ENCODE measurements at regions of chr6 and their contacts with region 1.

Region 1: DNA sequence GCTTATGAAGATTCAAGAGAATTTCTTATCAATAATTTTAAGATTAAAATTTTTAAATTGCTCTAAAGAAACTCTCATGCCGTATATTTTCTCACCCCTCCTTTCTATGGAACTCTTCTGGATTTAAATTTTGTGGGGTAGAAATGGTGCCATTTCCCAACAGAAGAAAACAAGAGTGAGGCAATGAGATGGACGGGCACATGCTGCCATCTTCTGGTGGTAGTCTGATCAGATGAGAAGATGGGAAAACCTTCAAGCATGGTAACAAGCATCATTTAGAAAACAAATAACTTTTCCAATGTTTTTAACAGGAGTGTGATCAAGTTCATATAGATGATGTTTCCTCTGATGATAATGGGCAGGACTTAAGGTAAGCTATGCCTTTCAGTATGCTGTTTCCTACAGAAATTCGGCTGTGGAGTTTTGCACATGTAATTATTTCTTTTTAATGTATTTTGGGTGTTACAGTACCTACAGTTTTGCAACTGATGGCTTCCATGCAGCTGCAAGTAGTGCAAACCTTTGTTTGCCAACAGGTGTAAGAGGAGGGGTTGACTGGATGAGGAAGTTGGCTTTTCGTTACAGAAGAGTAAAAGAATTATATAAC is 271.4 kb downstream of the EYA4 start:
- DNase-seq: peak; percentile 33
- H3K4me3 ChIP-seq: no peak overlapping the region
- H3K27ac ChIP-seq: no peak overlapping the region
- H3K4me1 ChIP-seq: no peaks in the 10 kb centered on the region
- H3K27me3 ChIP-seq: no peaks in the 10 kb centered on the region
- CTCF ChIP-seq: peak; percentile 21

Region 2: DNA sequence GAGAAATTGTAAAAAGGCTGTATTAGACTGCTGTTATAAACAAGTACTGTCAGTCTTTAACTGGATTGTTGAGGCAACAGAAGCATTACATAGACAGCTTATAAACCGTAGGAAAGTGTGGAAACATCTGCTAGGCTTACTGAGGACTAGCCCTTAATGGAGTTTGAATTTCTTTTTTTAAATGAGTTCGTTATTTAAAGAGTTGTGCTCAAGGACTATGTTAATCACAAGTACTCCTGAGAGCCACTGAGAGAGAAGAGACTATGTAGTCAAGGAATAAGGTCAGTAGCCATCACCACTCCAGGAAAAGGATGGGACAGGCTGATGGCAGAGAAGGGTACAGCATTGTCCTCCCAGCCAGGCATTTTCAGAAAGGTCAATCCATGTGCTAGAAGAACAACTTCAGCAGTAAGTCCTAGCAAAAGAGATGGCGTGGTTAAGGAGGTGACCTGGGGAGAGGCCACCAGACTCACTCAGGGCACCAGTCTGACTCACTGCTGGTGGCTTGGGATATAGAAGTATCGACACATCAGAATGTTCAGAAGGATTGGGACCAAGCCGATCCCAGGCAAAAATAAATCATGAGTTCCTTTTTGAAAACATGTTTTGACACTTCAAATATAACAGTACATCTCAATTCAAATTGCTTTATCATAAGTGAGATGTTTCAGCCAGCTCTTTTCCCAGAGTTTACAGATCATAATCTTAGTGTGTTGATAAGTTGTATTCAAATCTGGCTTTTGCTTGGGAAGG is 691.7 kb before region 1 on chr6:
- intact Hi-C with region 1: loop called (anchors 10 kb)
- DNase-seq: no peak
- H3K4me3 ChIP-seq: no peak overlapping the region
- H3K27ac ChIP-seq: no peak overlapping the region
- H3K4me1 ChIP-seq: peaks cover 4% of the 10 kb centered on the region
- H3K27me3 ChIP-seq: no peaks in the 10 kb centered on the region
- CTCF ChIP-seq: no peak

Region 3: DNA sequence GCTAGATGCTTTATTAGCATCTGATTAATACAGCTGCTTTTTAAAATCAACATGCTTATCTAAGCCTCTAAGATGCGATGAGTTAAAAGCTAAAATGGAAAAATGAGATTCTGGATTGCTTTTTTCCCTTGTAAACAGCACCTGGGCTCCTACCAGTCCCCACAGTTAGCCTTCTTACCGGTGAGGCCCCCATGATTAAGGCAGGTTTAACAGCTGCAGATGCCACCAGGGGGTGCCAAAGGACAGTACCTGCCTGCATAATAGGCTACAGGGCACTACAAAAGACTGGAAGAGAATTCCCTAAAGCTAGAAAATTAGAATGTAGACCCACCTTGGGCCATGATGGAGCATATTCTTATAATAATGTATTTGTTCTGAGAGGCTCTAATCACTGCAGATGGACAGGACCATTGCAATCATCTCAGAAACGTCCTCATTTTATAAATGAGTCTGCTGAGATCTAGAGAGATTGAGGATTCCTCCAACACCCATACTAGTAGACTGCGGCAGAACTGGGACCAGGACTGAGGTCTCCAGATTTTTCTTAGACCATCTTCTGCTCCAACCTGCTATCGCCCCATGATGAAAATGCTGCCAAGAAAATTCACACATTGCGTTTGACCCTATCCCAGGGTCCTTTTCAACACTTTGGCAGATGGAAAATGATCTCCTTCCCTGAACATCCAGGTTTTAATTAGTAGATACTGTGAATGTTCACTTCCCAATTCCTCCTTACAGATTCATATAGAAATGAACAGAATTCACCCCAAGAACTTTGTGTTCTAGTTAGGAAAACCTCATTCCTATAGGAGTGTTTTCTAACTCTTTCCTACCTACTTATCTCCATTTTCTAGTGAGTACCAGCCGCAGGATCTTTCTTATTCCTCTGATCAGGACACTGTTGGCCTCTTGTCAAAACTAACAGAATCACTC is 549.3 kb before region 1 on chr6:
- intact Hi-C with region 1: loop called (anchors 5 kb)
- DNase-seq: peak; percentile 69
- H3K4me3 ChIP-seq: no peak overlapping the region
- H3K27ac ChIP-seq: no peak overlapping the region
- H3K4me1 ChIP-seq: no peaks in the 10 kb centered on the region
- H3K27me3 ChIP-seq: no peaks in the 10 kb centered on the region
- CTCF ChIP-seq: peak; percentile 70

Region 4: DNA sequence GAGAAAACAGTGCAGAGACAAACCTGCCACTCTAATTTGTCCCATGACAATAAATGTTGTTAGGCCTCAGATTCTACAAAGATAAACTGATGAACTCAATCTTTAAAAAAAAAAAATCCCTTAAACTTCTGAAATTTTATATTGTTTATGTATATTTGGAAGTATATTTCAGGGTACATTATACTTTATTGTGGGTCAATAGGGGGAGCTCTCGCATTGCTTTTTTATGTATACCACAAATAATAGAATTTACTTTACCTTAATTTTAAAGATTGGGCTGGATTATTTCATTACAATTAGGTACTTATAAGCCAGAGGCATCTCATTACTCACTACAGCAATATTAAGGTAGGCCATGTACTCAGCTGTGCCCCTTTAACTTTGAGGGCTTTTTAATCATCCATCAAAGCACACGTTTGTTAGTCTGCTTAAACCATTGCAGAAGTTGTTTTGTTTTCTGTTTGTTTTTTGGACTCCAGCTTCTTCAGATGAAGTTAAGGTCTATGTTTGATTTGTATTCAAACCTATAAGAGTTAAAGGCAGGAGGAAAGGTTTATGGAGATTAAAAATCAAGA is 327.6 kb before region 1 on chr6:
- intact Hi-C with region 1: loop called (anchors 5 kb)
- DNase-seq: no peak
- H3K4me3 ChIP-seq: no peak overlapping the region
- H3K27ac ChIP-seq: no peak overlapping the region
- H3K4me1 ChIP-seq: no peaks in the 10 kb centered on the region
- H3K27me3 ChIP-seq: no peaks in the 10 kb centered on the region
- CTCF ChIP-seq: peak; percentile 28

Measured in colonic mucosa (tissue), 4 donors.